ENCODE measurements at regions of chr18 and their contacts with region 1.

Region 1: GRCh38 chr18:59402432-59403090 is 43.5 kb upstream of the LMAN1 start:
- DNase-seq: peak; percentile 77
- ATAC-seq: peak; percentile 99
- H3K4me3 ChIP-seq: no peak overlapping the region
- H3K27ac ChIP-seq: no peak overlapping the region
- H3K4me1 ChIP-seq: no peaks in the 10 kb centered on the region
- H3K27me3 ChIP-seq: no peaks in the 10 kb centered on the region
- CTCF ChIP-seq: peak; percentile 92

Region 2: GRCh38 chr18:59218018-59218417 is 184.5 kb before region 1 on chr18:
- intact Hi-C with region 1: no loop called
- DNase-seq: no peak
- ATAC-seq: no peak
- H3K4me3 ChIP-seq: no peak overlapping the region
- H3K27ac ChIP-seq: no peak overlapping the region
- H3K4me1 ChIP-seq: no peaks in the 10 kb centered on the region
- H3K27me3 ChIP-seq: peaks cover 54% of the 10 kb centered on the region
- CTCF ChIP-seq: no peak

Region 3: GRCh38 chr18:59308248-59308937 is 94.2 kb before region 1 on chr18:
- intact Hi-C with region 1: loop called (anchors 10 kb)
- DNase-seq: peak; percentile 88
- ATAC-seq: peak; percentile 98
- H3K4me3 ChIP-seq: peak overlapping the region; percentile 30
- H3K27ac ChIP-seq: no peak overlapping the region
- H3K4me1 ChIP-seq: peaks cover 9% of the 10 kb centered on the region
- H3K27me3 ChIP-seq: peaks cover 28% of the 10 kb centered on the region
- CTCF ChIP-seq: peak; percentile 84

Region 4: DNA sequence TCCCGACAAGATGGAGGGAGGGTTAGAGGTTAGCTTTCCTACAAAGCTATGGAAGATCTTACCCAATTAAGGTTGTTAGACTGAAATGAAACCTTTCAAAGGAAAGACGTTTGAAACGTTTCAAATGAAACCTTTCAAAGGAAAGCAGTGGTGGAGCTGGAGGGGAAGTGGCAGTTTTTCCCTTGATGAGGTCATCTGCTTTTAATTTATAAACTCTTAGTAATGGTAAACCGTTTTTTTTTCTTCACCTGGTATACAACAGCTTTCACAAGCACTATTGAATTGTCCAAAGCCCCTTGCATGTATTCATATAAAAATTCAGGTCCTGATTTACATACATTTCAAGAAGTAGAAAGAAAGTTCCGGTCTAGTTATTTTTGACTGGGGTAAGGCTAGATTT is 504.6 kb after region 1 on chr18:
- intact Hi-C with region 1: no loop called
- DNase-seq: no peak
- ATAC-seq: no peak
- H3K4me3 ChIP-seq: no peak overlapping the region
- H3K27ac ChIP-seq: no peak overlapping the region
- H3K4me1 ChIP-seq: no peaks in the 10 kb centered on the region
- H3K27me3 ChIP-seq: no peaks in the 10 kb centered on the region
- CTCF ChIP-seq: no peak

Measured in upper lobe of right lung (tissue), 1 donor.